Sigmoid colon (tissue), 7 donors: ENCODE measurements at regions of chr3 and their contacts with region 1.

Region 1: GRCh38 chr3:99859825-99860224 is 42.2 kb downstream of the CMSS1 start:
- DNase-seq: no peak
- H3K4me3 ChIP-seq: no peak overlapping the region
- H3K27ac ChIP-seq: peak overlapping the region; percentile 68 to 95 (median 92)
- H3K4me1 ChIP-seq: peaks cover 0 to 96% (median 82%) of the 10 kb centered on the region in 4 donors
- H3K27me3 ChIP-seq: no peaks in the 10 kb centered on the region
- CTCF ChIP-seq: no peak
- EP300 ChIP-seq: peak in 2 of 4 donors; percentile 34 to 54
- POLR2A ChIP-seq: no peak

Region 2: GRCh38 chr3:99783009-99783573 is 76.7 kb before region 1 on chr3:
- intact Hi-C with region 1: no loop called
- DNase-seq: no peak
- H3K4me3 ChIP-seq: no peak overlapping the region
- H3K27ac ChIP-seq: no peak overlapping the region
- H3K4me1 ChIP-seq: peaks cover 0 to 3% (median 1%) of the 10 kb centered on the region in 4 donors
- H3K27me3 ChIP-seq: no peaks in the 10 kb centered on the region
- CTCF ChIP-seq: no peak
- EP300 ChIP-seq: no peak
- POLR2A ChIP-seq: no peak

Region 3: GRCh38 chr3:99925584-99926212 is 65.9 kb after region 1 on chr3:
- intact Hi-C with region 1: loop called (anchors 5 kb)
- DNase-seq: peak; percentile 79
- H3K4me3 ChIP-seq: no peak overlapping the region
- H3K27ac ChIP-seq: peak overlapping the region; percentile 36 to 84 (median 54)
- H3K4me1 ChIP-seq: peaks cover 0 to 49% (median 44%) of the 10 kb centered on the region in 4 donors
- H3K27me3 ChIP-seq: no peaks in the 10 kb centered on the region
- CTCF ChIP-seq: no peak
- EP300 ChIP-seq: no peak
- POLR2A ChIP-seq: no peak